Stomach (tissue), 19 donors: ENCODE measurements at regions of chr3 and their contacts with region 1.

Region 1: DNA sequence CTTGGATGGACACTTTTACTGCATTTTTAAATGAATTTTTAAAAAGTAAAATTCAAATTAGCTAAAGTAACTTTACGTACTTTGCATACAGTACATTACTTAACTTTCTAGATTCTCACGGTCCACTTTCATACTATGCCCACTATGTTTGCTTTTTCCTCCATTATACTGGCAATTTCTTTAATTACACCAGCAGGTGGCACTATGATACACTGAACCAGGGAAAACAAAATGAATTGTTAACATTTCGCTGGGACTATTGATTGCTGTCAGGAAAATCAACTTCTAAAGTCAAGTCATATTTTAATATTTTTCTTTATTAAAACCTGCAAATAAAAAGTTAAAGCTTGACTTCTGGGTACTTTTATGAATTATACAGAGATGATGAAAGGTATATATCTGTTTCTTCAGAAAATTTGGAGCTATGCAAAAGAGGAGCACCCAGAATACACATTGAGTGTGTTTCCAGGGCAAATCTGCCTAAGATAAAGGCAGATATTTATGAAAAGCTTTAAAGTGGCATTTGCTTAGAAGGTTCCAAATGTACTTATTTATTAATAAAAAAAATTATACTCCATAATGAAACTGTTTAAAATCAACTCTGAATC is 21.8 kb upstream of the POU1F1 start:
- DNase-seq: peak in 1 of 2 donors; percentile 69
- H3K4me3 ChIP-seq: no peak overlapping the region
- H3K27ac ChIP-seq: no peak overlapping the region
- H3K4me1 ChIP-seq: no peaks in the 10 kb centered on the region
- H3K27me3 ChIP-seq: no peaks in the 10 kb centered on the region
- CTCF ChIP-seq: peak in 5 of 7 experiments; percentile 35 to 70 (median 47)
- EP300 ChIP-seq: no peak
- POLR2A ChIP-seq: no peak

Region 2: GRCh38 chr3:87370007-87370406 is 71.8 kb after region 1 on chr3:
- intact Hi-C with region 1: no loop called
- DNase-seq: no peak
- H3K4me3 ChIP-seq: no peak overlapping the region
- H3K27ac ChIP-seq: no peak overlapping the region
- H3K4me1 ChIP-seq: no peaks in the 10 kb centered on the region
- H3K27me3 ChIP-seq: no peaks in the 10 kb centered on the region
- CTCF ChIP-seq: no peak
- EP300 ChIP-seq: no peak
- POLR2A ChIP-seq: no peak

Region 3: DNA sequence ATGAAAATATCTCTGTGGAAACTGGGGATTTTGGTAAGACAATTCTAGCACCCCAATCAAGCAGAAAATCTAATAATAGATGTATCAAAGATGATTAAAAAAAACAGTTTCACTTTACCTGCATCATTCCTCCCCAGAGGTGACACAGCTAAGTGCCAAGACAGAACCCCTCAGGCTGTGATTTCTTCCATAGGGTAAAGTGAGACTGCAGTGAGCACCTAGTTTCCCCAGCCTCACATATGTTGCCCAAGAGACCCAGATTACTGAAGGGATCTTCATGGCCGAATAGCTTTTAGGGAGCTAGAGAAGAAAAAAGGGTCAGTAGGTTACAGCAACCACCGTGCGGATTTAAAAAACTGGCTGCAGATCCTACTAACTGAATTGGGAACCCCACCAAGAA is 82.5 kb after region 1 on chr3:
- intact Hi-C with region 1: no loop called
- DNase-seq: no peak
- H3K4me3 ChIP-seq: no peak overlapping the region
- H3K27ac ChIP-seq: no peak overlapping the region
- H3K4me1 ChIP-seq: no peaks in the 10 kb centered on the region
- H3K27me3 ChIP-seq: no peaks in the 10 kb centered on the region
- CTCF ChIP-seq: no peak
- EP300 ChIP-seq: no peak
- POLR2A ChIP-seq: no peak

Region 4: GRCh38 chr3:87503900-87504508 is 205.8 kb after region 1 on chr3:
- intact Hi-C with region 1: loop called (anchors 10 kb)
- DNase-seq: peak; percentile 28 to 73
- H3K4me3 ChIP-seq: no peak overlapping the region
- H3K27ac ChIP-seq: no peak overlapping the region
- H3K4me1 ChIP-seq: no peaks in the 10 kb centered on the region
- H3K27me3 ChIP-seq: no peaks in the 10 kb centered on the region
- CTCF ChIP-seq: peak in 5 of 7 experiments; percentile 35 to 81 (median 60)
- EP300 ChIP-seq: no peak
- POLR2A ChIP-seq: no peak